ENCODE measurements at regions of chr1 and their contacts with region 1.

Region 1: DNA sequence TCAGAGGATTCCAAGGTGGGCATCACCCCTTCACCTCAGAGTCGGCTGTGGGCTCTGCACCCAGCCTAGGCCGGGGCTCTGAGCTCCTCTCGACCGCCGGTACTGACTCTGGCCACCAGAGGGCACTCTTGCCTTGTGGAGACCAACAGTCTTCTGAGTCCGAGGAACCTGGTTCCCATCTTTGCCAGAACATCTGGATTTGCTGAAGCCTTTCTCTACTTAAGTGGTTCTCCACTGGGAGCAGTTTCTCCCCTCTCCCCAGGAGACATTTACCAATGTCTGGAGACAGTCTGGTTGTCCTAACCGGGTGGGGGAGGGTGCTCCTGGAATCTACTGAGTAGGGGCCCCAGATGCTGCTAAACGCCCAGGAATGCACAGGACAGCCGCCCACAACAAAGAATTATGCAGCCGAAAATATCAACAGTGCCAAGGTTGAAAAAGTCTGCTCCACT is 9.4 kb downstream of the ETV3L start:
- DNase-seq: peak; percentile 91
- ATAC-seq: peak; percentile 86

Region 2: DNA sequence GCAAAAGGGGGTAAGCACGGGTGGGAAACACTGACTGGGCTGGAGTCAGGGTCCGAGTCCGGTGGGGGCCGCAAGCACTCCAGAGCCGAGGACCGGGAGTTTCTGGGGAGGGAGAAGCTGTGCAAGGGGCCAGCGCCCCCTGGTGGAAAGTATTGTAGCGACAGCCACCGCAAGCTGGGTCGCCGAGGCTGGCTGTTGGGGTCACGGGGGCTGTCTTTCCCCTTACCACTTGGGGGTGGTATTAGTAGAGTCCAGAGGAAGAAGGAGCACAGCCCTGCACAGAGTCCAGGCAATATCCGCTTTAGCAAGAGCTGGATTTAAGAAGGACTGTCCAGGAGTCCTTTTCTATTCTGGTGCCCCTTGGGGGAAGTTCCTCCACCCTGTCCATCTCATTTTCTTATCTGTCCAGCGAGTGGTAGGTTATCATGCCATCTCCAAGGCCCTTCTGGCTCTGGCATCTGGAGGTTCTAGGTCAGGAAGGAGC is 65.9 kb after region 1 on chr1:
- intact Hi-C with region 1: loop called (anchors 1 kb)
- DNase-seq: peak; percentile 89
- ATAC-seq: peak; percentile 77

Region 3: DNA sequence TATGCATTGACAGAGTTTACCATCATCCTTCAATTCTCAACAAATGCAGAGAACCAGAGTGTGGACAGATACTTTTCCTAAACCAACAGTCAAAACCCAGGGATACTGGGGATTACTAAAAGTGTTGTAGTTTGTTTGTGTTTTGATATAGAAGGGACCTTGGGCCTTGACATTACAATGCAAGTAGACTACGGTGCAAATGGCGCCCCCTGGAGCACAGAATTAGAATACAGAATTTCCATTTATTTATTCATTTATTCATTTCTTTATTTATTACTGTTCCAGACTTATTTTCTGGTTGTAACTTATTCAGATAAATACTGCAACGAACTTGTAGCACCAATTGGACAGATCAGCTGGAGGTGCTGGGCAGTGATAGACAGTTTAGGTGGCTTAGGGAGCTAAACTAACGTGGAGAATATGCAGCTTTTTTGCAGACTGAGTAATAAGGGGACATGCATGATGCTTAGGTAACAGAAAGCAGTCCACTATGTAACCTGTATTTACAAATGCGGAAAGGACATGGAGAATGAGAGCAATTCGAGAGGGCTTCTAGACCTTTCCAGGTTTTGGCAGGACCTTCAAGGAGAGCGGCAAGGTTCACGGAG is 945.9 kb after region 1 on chr1:
- intact Hi-C with region 1: no loop called
- DNase-seq: no peak
- ATAC-seq: no peak

Measured in Right ventricle myocardium inferior (tissue), 1 donor.